Activated naive CD4-positive, alpha-beta T cell treated with anti-CD3 and anti-CD28 coated beads for 36 hours (primary cell): ENCODE measurements at regions of chr18 and their contacts with region 1.

Region 1: GRCh38 chr18:54284981-54285785 is 15.9 kb downstream of the POLI start:
- DNase-seq: peak; percentile 86
- H3K4me3 Mint-ChIP-seq: no peak overlapping the region
- H3K27ac Mint-ChIP-seq: peak overlapping the region; percentile 17
- H3K4me1 Mint-ChIP-seq: peaks cover 18% of the 10 kb centered on the region
- H3K27me3 Mint-ChIP-seq: no peaks in the 10 kb centered on the region

Region 2: GRCh38 chr18:54163453-54163852 is 121.7 kb before region 1 on chr18:
- CTCF ChIA-PET with region 1: no interaction called
- intact Hi-C with region 1: loop called (anchors 1 kb)
- DNase-seq: no peak
- H3K4me3 Mint-ChIP-seq: no peak overlapping the region
- H3K27ac Mint-ChIP-seq: peak overlapping the region; percentile 87
- H3K4me1 Mint-ChIP-seq: peaks cover 21% of the 10 kb centered on the region
- H3K27me3 Mint-ChIP-seq: no peaks in the 10 kb centered on the region

Region 3: GRCh38 chr18:54209471-54210180 is 75.6 kb before region 1 on chr18:
- CTCF ChIA-PET with region 1: interaction called, 4 read pairs
- intact Hi-C with region 1: loop called (anchors 1 kb)
- DNase-seq: no peak
- H3K4me3 Mint-ChIP-seq: peak overlapping the region; percentile 50
- H3K27ac Mint-ChIP-seq: peak overlapping the region; percentile 88
- H3K4me1 Mint-ChIP-seq: peaks cover 54% of the 10 kb centered on the region
- H3K27me3 Mint-ChIP-seq: no peaks in the 10 kb centered on the region

Region 4: GRCh38 chr18:54269893-54270844 is 15.0 kb before region 1 on chr18:
- CTCF ChIA-PET with region 1: interaction called, 19 read pairs
- intact Hi-C with region 1: loop called (anchors 1 kb)
- DNase-seq: peak; percentile 62
- H3K4me3 Mint-ChIP-seq: peak overlapping the region; percentile 83
- H3K27ac Mint-ChIP-seq: peak overlapping the region; percentile 94
- H3K4me1 Mint-ChIP-seq: peaks cover 24% of the 10 kb centered on the region
- H3K27me3 Mint-ChIP-seq: no peaks in the 10 kb centered on the region

Region 5: DNA sequence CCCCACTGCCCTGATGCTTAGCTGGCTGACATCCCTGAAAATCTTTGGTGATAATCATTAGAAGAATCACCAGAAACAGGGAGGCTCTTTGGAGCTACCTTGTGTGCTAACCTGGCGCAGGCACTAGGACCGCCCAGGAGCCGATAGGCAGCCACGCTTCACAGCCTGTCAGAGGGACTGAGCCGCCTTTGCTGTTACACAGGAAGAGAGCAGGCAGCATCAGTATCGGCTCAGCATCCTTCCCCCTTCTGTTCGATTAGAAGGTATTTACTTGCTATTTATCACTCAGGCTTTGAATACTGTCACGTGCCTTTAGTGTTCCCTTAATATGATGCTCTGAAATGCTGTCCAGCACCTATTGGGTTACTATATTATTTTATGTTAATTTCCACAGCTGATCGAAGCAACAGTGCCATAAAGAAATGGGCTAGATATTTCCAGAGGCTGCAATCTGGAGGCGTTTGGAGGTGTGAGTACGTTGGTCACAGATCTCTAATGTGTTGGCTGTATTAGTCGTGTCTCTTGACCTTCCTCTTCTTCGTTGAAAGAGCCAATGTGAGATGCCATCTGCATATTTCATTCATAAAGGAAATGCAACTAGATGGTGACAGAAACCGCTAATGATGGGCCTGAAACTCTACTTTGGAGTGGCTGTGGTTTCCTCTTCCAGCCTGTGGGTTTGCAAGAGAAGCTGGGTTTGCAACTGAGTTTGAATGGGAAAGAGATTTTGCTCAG is 432.7 kb after region 1 on chr18:
- CTCF ChIA-PET with region 1: no interaction called
- intact Hi-C with region 1: loop called (anchors 5 kb)
- DNase-seq: peak; percentile 69
- H3K4me3 Mint-ChIP-seq: peak overlapping the region; percentile 60
- H3K27ac Mint-ChIP-seq: no peak overlapping the region
- H3K4me1 Mint-ChIP-seq: peaks cover 33% of the 10 kb centered on the region
- H3K27me3 Mint-ChIP-seq: peaks cover 12% of the 10 kb centered on the region